HepG2 (cell line): ENCODE measurements at regions of chr17 and their contacts with region 1.

Region 1: GRCh38 chr17:50691545-50692447 is 15.9 kb downstream of the ANKRD40 start:
- DNase-seq: peak; percentile 85
- ATAC-seq: peak; percentile 7
- H3K4me3 ChIP-seq: peak overlapping the region in 1 of 3 experiments; percentile 42; a peak in 1 of 6 replicates
- H3K27ac ChIP-seq: peak overlapping the region; percentile 89
- H3K4me1 ChIP-seq: peaks cover 91% of the 10 kb centered on the region
- H3K27me3 ChIP-seq: no peaks in the 10 kb centered on the region
- CTCF ChIP-seq: no peak
- EP300 ChIP-seq: peak; percentile 27 to 71; a peak in 2 of 4 replicates
- POLR2A ChIP-seq: peak; percentile 10 to 29; a peak in 2 of 4 replicates
- RAD21 ChIP-seq: peak; percentile 9; the same call in 1 of the 2 replicates

Region 2: GRCh38 chr17:50647187-50647586 is 44.6 kb before region 1 on chr17:
- CTCF ChIA-PET with region 1: no interaction called
- POLR2A ChIA-PET with region 1: interaction called, 839 read pairs
- in situ Hi-C with region 1: no loop called
- intact Hi-C with region 1: no loop called
- DNase-seq: no peak
- ATAC-seq: no peak
- H3K4me3 ChIP-seq: no peak overlapping the region
- H3K27ac ChIP-seq: no peak overlapping the region
- H3K4me1 ChIP-seq: peaks cover 49% of the 10 kb centered on the region
- H3K27me3 ChIP-seq: no peaks in the 10 kb centered on the region
- CTCF ChIP-seq: no peak
- EP300 ChIP-seq: no peak
- POLR2A ChIP-seq: no peak
- RAD21 ChIP-seq: no peak

Region 3: DNA sequence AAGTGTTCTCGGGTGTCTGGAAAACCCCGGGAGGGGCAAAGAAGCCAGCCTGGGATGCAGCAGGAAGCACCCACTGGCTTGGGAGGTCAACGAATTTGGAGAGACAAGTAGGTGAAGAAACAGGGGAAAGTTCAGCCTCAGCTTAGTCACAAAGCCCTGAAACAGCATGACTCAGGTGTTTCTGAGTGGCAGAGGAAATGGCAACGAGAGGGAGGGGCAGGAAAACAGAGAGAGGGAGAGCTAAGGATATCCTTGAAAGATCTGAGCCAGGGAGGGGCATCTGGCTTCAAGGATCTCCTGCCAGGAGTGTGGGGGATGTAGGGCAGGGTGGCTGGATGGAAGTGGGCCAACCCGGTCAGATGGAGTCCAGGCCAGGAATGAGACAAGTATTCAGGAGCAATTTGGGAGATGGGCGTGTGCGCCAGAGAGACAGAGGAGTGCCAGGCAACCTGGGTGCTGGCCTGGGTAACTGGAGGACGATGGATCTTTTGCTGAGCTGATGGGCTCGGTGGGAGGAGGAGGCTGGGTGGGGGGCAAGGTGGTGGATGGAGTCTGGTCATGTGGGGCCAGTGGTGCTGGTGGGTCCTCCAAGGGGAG is 29.9 kb before region 1 on chr17:
- CTCF ChIA-PET with region 1: no interaction called
- POLR2A ChIA-PET with region 1: interaction called, 140 read pairs
- in situ Hi-C with region 1: no loop called
- intact Hi-C with region 1: no loop called
- DNase-seq: peak; percentile 93
- ATAC-seq: peak; percentile 42
- H3K4me3 ChIP-seq: peak overlapping the region in 1 of 3 experiments; percentile 11; a peak in 2 of 6 replicates
- H3K27ac ChIP-seq: peak overlapping the region; percentile 82
- H3K4me1 ChIP-seq: peaks cover 76% of the 10 kb centered on the region
- H3K27me3 ChIP-seq: no peaks in the 10 kb centered on the region
- CTCF ChIP-seq: no peak
- EP300 ChIP-seq: peak; percentile 31 to 94; a peak in 3 of 4 replicates
- POLR2A ChIP-seq: peak in 1 of 2 experiments; percentile 48; a peak in 1 of 4 replicates
- RAD21 ChIP-seq: no peak

Region 4: DNA sequence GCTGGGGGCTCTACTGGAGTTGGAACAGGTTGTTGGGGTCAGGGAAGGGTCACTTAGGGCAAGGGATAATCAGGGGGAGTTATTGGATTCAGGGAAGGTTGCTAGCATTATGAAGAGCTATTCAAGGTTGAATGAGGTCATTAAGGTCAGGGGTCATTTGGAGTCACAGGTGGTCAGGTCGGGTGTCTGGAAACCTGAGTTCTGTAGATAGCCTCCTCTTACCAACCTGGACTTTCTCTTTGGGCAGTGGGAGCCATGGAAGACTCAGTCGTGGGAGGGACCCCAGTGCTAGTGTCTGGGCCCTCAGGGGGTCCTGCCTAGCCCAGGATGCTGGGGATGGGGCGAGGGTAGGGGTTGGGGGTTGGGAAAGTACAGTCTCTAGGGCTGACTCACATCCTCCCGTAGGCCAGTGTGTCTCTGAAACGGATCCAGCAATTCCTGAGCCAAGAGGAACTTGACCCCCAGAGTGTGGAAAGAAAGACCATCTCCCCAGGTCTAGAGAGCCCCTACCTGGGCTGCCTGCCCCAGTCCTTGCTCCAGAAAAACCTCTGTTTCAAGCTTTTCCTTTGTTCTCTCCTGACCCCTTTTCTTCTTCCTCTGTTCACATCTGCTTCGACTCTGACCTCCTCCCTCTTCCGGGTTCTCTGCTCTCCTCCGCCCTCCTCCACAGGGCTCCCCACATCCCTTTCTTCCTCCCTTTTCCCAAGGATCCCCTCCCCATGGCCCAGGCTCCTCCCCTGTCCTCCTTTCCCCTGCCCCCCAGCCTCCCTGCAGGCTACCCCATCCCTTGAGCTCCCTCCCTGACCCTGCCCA is 23.6 kb before region 1 on chr17:
- CTCF ChIA-PET with region 1: no interaction called
- POLR2A ChIA-PET with region 1: interaction called, 140 read pairs
- in situ Hi-C with region 1: no loop called
- intact Hi-C with region 1: no loop called
- DNase-seq: no peak
- ATAC-seq: peak; percentile 15
- H3K4me3 ChIP-seq: 0 out of 6 replicates have a peak overlapping the region, but pooled peaks of 1 of the 3 experiments have one; percentile 5
- H3K27ac ChIP-seq: peak overlapping the region; percentile 19
- H3K4me1 ChIP-seq: peaks cover 70% of the 10 kb centered on the region
- H3K27me3 ChIP-seq: no peaks in the 10 kb centered on the region
- CTCF ChIP-seq: no peak
- EP300 ChIP-seq: no peak
- POLR2A ChIP-seq: no peak
- RAD21 ChIP-seq: no peak

Region 5: GRCh38 chr17:50681263-50682210 is 10.3 kb before region 1 on chr17:
- CTCF ChIA-PET with region 1: interaction called, 6 read pairs
- POLR2A ChIA-PET with region 1: interaction called, 257 read pairs
- in situ Hi-C with region 1: no loop called
- intact Hi-C with region 1: loop called (anchors 1 kb)
- DNase-seq: peak; percentile 69
- ATAC-seq: 0 out of 3 replicates have a peak, but pooled peaks have one; percentile 1
- H3K4me3 ChIP-seq: no peak overlapping the region
- H3K27ac ChIP-seq: no peak overlapping the region
- H3K4me1 ChIP-seq: peaks cover 86% of the 10 kb centered on the region
- H3K27me3 ChIP-seq: no peaks in the 10 kb centered on the region; a peak in 1 of 5 replicates
- CTCF ChIP-seq: peak; percentile 78
- EP300 ChIP-seq: no peak
- POLR2A ChIP-seq: no peak
- RAD21 ChIP-seq: peak; percentile 83